ENCODE measurements at regions of chr13 and their contacts with region 1.

Region 1: DNA sequence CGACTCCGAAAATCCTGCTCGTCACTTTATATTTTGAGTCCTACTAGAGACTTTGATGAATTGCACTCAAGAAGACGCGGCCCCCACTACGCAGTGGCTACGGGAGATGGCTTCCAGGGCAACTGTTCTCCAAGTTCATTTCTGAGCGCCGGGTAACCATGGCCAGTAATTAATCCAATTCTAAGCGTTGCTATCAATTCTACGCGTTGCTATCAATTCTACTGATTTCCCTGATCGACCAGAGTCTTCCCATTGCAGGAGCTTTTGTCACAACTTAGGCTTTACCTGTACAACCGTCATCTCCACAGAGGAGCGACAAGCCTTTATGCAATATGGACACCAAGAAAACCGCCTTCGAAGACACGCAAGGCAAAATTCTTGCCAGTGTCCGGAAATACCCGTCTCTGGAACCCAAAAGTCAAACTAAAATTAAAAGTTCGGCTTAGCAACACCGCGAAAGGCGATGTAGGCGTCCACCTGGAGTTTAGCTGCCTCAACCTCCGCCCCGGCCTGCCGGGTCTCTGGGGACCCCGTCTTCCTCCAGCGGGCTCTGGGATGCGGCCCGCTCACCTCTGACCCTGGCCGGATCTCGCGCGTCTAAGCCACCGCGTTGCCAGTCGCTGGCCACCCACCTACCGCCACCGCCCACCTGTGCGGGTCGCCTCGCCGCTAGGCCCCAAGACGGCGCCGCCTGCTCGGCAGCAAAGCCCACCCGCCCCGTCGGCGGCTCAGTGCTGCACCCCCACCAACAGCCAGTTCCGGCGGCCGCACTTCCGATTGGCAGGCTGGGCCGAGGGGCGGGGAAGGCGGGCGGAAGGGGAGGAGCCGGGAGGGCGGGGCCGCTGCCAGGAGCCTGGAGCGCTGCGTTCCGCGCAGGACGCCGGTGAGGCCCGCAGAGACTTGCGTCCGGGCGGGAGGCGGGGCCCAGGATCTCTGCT is at the start of gene SUPT20H:
- DNase-seq: peak; percentile 87 to 97 (median 93)
- ATAC-seq: peak; percentile 95 to 97 (median 96)
- H3K4me3 ChIP-seq: peak within 1 kb of the TSS; percentile 79 to 93
- H3K4me3 Mint-ChIP-seq: peak within 1 kb of the TSS; percentile 87 to 96 (median 90)
- H3K27ac ChIP-seq: peak within 1 kb of the TSS; percentile 93
- H3K27ac Mint-ChIP-seq: peak within 1 kb of the TSS; percentile 97
- H3K4me1 ChIP-seq: peaks cover 8 to 22% of the 10 kb centered on the region in 2 experiments
- H3K4me1 Mint-ChIP-seq: peaks cover 37 to 56% (median 49%) of the 10 kb centered on the region in 3 donors
- H3K27me3 ChIP-seq: no peaks in the 10 kb centered on the region
- H3K27me3 Mint-ChIP-seq: no peaks in the 10 kb centered on the region
- total RNA-seq, gene SUPT20H: 73.8 to 90.9 (median 87.3) TPM

Region 2: DNA sequence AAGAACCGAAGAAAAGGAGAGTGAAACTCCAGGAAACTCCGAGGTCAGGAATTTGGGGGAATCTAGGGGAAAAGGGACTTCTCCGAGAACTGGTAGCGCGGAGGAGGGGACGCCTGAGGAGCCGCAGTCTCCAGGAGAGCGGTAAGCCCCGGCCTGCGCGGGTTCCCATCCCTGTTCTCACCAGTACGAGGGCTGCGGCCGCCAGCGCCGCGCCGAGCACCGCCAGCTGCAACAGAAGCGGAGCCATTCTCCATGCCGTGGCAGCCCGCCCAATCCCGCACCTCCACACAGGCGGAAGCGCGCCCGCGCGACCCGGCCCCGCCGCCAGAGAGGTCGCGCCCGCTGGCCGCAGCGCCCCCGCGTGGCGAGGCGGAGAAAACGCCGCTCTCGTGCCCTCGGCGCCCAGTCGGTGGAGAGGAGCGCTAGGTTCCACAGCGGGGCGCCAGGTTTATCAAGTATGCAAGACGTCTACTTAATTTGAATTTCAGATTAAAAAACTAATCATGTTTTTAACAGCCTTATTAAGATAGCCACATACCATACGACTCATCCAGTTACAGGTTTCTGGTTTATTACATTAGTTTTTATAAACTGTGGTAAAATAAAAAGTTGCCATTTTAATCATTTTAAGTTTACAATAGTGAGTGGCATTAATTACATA is 60.0 kb before region 1 on chr13 and contains the start of gene ALG5:
- CTCF ChIA-PET with region 1: interaction called, 5 to 11 read pairs
- POLR2A ChIA-PET with region 1: no interaction called
- DNase-seq: peak; percentile 87 to 97 (median 92)
- ATAC-seq: peak; percentile 70 to 79 (median 76)
- H3K4me3 ChIP-seq: peak within 1 kb of the TSS; percentile 98 to 99
- H3K4me3 Mint-ChIP-seq: peak within 1 kb of the TSS; percentile 92 to 100 (median 100)
- H3K27ac ChIP-seq: peak within 1 kb of the TSS; percentile 97
- H3K27ac Mint-ChIP-seq: peak within 1 kb of the TSS; percentile 100
- H3K4me1 ChIP-seq: peaks cover 10 to 16% of the 10 kb centered on the region in 2 experiments
- H3K4me1 Mint-ChIP-seq: peaks cover 42 to 53% (median 50%) of the 10 kb centered on the region in 3 donors
- H3K27me3 ChIP-seq: no peaks in the 10 kb centered on the region
- H3K27me3 Mint-ChIP-seq: peaks cover 0 to 2% of the 10 kb centered on the region in 2 donors
- total RNA-seq, gene ALG5: 15.8 to 20.3 (median 19.1) TPM

Region 3: GRCh38 chr13:37295071-37295470 is 235.9 kb after region 1 on chr13:
- CTCF ChIA-PET with region 1: no interaction called
- POLR2A ChIA-PET with region 1: no interaction called
- DNase-seq: no peak
- ATAC-seq: no peak
- H3K4me3 ChIP-seq: no peak overlapping the region
- H3K4me3 Mint-ChIP-seq: no peak overlapping the region
- H3K27ac ChIP-seq: no peak overlapping the region
- H3K27ac Mint-ChIP-seq: no peak overlapping the region
- H3K4me1 ChIP-seq: no peaks in the 10 kb centered on the region
- H3K4me1 Mint-ChIP-seq: no peaks in the 10 kb centered on the region
- H3K27me3 ChIP-seq: no peaks in the 10 kb centered on the region
- H3K27me3 Mint-ChIP-seq: no peaks in the 10 kb centered on the region